ENCODE measurements at regions of chr9 and their contacts with region 1.

Region 1: DNA sequence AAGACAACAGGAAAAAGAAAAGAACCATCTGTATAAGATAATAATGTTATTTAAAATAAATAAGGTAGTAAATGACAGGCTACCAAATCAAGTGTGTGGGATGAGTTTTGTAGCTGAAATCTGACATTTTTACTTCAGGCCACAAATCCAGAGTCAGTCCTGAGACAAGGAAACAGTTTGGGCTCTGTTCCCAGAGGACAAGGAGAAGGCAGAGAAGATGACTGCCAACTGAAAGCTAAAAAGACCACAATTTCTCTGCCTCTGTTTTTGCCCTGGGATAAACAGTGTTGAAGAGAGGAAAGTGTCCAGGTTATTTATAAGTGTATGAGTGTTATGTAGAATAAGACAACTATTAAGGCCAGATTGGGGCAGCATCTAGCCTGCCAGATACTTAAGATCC is 180.5 kb downstream of the NFIB start:
- DNase-seq: no peak
- H3K4me3 ChIP-seq: no peak overlapping the region
- H3K27ac ChIP-seq: peak overlapping the region; percentile 12 to 29
- H3K4me1 ChIP-seq: no peaks in the 10 kb centered on the region
- H3K27me3 ChIP-seq: no peaks in the 10 kb centered on the region
- CTCF ChIP-seq: no peak
- POLR2A ChIP-seq: no peak

Region 2: GRCh38 chr9:14153310-14154008 is 20.1 kb after region 1 on chr9:
- intact Hi-C with region 1: no loop called
- DNase-seq: no peak
- H3K4me3 ChIP-seq: peak overlapping the region in 1 of 3 donors; percentile 2
- H3K27ac ChIP-seq: peak overlapping the region; percentile 8 to 67
- H3K4me1 ChIP-seq: peaks cover 0 to 6% of the 10 kb centered on the region in 2 donors
- H3K27me3 ChIP-seq: no peaks in the 10 kb centered on the region
- CTCF ChIP-seq: no peak
- POLR2A ChIP-seq: no peak

Region 3: GRCh38 chr9:14165376-14166035 is 32.1 kb after region 1 on chr9:
- intact Hi-C with region 1: loop called (anchors 1 kb)
- DNase-seq: no peak
- H3K4me3 ChIP-seq: no peak overlapping the region
- H3K27ac ChIP-seq: peak overlapping the region in 1 of 2 donors; percentile 30
- H3K4me1 ChIP-seq: peaks cover 0 to 6% of the 10 kb centered on the region in 2 donors
- H3K27me3 ChIP-seq: no peaks in the 10 kb centered on the region
- CTCF ChIP-seq: no peak
- POLR2A ChIP-seq: no peak

Measured in breast epithelium (tissue), 4 donors.